ENCODE measurements at regions of chr19 and their contacts with region 1.

Region 1: DNA sequence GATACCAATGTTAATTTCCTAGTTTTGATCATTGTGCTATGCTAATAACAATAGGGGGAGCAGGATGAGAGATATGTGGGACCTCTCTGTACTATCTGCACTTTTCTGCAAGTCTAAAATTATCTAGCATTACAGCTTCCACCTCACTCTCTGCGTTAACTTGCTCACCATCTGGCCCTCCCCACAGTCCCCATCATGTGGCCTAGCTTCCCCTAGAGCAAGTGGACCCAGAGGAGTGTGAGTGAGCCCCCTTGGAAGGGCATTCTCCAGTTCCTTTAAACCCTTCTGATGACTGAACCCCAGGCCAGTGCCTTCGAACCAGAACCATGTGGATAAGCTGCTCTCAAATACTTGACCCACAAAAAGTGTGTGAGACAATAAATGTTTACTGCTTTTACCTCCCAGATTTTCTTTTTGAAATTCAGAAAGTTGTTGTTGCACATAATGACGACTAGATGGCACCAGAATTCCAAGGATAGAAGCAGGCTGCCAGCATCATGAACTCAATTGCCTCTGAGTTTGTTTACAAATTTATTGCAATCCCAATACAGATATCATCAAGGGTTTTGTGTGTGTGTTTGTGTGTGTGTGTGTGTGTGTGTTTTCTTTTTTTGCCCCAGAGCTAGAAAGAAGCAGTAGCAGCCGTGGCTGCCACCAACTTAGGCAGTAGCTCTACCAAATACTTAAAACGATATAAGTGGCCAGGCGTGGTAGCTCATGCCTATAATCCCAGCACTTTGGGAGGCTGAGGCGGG is 49.0 kb upstream of the ZNF780A start:
- DNase-seq: peak in 1 of 10 donors; percentile 28
- H3K4me3 ChIP-seq: no peak overlapping the region
- H3K27ac ChIP-seq: no peak overlapping the region
- H3K27me3 ChIP-seq: peaks cover 0 to 4% (median 0%) of the 10 kb centered on the region in 45 donors
- CTCF ChIP-seq: peak; percentile 39 to 85 (median 73)

Region 2: DNA sequence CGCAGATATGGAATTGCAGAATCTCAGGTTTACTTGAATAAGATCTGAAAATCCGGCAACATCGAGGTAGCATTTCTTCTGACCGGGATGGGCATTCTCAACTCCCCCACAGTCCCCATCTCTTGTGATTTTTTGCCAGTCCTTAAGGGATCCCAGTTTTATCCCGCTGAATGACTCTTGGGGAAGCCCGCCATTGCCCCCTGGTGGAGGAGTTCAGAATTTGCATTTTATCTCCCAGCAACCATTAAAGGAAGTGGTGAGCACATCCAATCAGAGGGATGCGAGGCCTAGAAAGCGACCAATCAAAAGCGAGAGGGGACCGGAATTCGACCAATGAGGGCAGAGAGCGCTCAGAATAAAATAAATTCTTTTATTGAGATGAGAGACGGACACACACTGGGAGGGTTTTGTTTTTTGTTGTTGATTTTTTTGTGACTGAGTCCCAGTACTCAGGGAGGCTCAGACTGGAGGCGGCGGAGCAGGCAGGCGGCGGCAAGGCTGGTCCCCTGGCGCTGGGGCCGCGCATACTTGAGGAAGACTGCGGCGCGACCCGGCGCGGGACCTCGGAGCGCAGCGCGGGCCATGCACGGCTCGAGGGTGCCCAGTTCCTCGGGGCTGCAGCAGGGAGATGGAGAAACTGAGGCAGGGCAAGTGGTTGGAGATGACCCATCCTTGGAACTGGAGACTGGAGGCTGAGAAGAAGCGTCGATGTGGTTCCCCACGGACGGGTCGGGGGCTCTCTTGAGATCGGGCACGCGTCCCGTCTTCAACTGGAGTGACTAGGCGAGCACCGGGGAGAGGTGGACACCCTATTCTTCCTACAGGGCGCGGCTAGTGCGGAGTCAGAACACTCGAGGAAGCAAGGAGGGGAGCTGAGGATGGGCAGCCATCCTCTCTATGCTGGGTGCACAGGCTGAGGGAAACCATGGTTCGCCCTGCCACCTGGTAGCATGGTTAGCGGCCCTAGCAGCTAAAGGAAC is 82.4 kb after region 1 on chr19:
- intact Hi-C with region 1: loop called (anchors 2 kb)
- DNase-seq: peak; percentile 52 to 93 (median 83)
- H3K4me3 ChIP-seq: peak overlapping the region in 3 of 59 donors; percentile 6 to 18 (median 9)
- H3K27ac ChIP-seq: peak overlapping the region in 1 of 59 donors; percentile 12
- H3K27me3 ChIP-seq: peaks cover 0 to 38% (median 8%) of the 10 kb centered on the region in 45 donors
- CTCF ChIP-seq: peak; percentile 84 to 98 (median 92)

Region 3: GRCh38 chr19:40279120-40279551 is 139.4 kb after region 1 on chr19:
- intact Hi-C with region 1: loop called in 1 of 2 experiments (anchors 10 kb)
- DNase-seq: peak in 5 of 10 donors; percentile 46 to 68 (median 59)
- H3K4me3 ChIP-seq: peak overlapping the region in 38 of 59 donors; percentile 1 to 46 (median 24)
- H3K27ac ChIP-seq: peak overlapping the region; percentile 23 to 100 (median 79)
- H3K27me3 ChIP-seq: no peaks in the 10 kb centered on the region
- CTCF ChIP-seq: peak in 22 of 56 donors; percentile 6 to 43 (median 18)

Region 4: DNA sequence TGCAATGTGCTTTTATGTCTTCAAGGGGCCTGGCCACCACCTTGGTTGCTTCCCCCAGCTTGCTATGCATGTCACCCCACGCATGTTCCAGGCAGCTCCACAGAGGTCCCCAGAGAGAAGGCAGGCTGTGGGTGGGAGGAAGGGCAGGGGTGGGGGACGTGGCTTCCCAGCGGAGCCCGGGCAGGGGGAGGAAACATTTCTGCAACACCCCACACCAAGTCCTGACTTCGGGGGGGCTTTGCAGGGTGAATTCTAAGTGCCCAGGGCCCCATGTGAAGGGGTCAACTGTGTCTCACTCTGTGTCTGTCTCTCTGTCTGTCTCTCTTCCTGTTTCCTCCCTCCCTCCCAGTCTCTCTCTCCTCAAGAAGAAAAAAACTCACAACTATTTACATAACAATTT is 501.0 kb after region 1 on chr19:
- intact Hi-C with region 1: loop called in 1 of 2 experiments (anchors 5 kb)
- DNase-seq: no peak
- H3K4me3 ChIP-seq: no peak overlapping the region
- H3K27ac ChIP-seq: no peak overlapping the region
- H3K27me3 ChIP-seq: peaks cover 0 to 3% (median 0%) of the 10 kb centered on the region in 45 donors
- CTCF ChIP-seq: no peak

Measured in dorsolateral prefrontal cortex (tissue), 120 donors.